ENCODE measurements at regions of chr11 and their contacts with region 1.

Region 1: GRCh38 chr11:60193687-60194433 is 11.0 kb upstream of the MS4A6A start:
- DNase-seq: peak; percentile 83
- ATAC-seq: peak; percentile 99
- H3K4me3 Mint-ChIP-seq: no peak overlapping the region
- H3K27ac Mint-ChIP-seq: no peak overlapping the region
- H3K4me1 Mint-ChIP-seq: peaks cover 20% of the 10 kb centered on the region
- H3K27me3 Mint-ChIP-seq: peaks cover 19% of the 10 kb centered on the region

Region 2: DNA sequence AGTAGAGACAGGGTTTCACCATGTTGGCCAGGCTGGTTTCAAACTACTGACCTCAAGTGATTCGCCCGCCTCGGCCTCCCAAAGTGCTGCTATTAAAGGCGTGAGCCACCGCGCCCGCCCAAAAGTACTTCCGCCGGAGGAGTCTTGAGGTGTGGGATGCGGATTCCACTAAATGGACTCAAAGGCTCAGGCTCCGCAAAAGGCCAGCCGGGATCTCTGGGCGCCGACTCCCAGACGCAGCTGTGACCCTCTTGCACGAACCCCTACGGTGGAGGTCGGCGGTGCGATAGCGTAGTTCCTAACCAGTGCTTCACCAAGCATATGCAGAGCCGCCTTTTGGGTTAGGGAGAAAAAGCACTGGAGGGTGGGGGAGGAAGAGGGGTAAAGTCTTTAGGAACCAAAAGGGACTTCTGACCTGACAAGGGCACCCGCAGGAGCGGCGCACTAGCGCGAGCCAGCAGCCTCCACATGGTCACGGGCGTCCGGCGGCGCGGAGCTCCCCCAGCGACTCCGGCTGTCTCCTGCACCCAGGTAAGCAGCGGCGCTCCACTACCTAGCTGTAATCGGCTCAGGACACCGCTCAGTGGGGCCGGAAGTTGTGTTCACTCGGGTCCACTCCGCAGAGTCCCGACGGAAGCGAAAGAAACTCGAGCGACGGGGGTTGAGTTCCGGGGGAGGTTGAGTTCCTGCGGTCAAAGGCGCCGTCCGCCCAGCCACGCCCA is 383.5 kb before region 1 on chr11 and contains the start of gene MRPL16:
- CTCF ChIA-PET with region 1: no interaction called
- POLR2A ChIA-PET with region 1: no interaction called
- intact Hi-C with region 1: loop called in 1 of 2 experiments (anchors 5 kb)
- DNase-seq: peak; percentile 94
- ATAC-seq: peak; percentile 99
- H3K4me3 Mint-ChIP-seq: peak within 1 kb of the TSS; percentile 88
- H3K27ac Mint-ChIP-seq: peak within 1 kb of the TSS; percentile 88
- H3K4me1 Mint-ChIP-seq: peaks cover 18% of the 10 kb centered on the region
- H3K27me3 Mint-ChIP-seq: no peaks in the 10 kb centered on the region
- total RNA-seq, gene MRPL16: 77.9 to 82.6 TPM

Region 3: GRCh38 chr11:60145677-60146076 is 48.2 kb before region 1 on chr11:
- CTCF ChIA-PET with region 1: interaction called, 4 read pairs
- POLR2A ChIA-PET with region 1: no interaction called
- intact Hi-C with region 1: loop called (anchors 2 to 5 kb)
- DNase-seq: no peak
- ATAC-seq: peak; percentile 52
- H3K4me3 Mint-ChIP-seq: no peak overlapping the region
- H3K27ac Mint-ChIP-seq: no peak overlapping the region
- H3K4me1 Mint-ChIP-seq: peaks cover 23% of the 10 kb centered on the region
- H3K27me3 Mint-ChIP-seq: peaks cover 4% of the 10 kb centered on the region

Measured in activated CD4-positive, alpha-beta T cell treated with anti-CD3 and anti-CD28 coated beads for 36 hours (primary cell).